ENCODE measurements at regions of chr5 and their contacts with region 1.

Region 1: GRCh38 chr5:64784451-64785025 is 15.8 kb downstream of the CWC27 start:
- DNase-seq: peak; percentile 82
- H3K4me3 ChIP-seq: no peak overlapping the region
- H3K27ac ChIP-seq: no peak overlapping the region
- H3K4me1 ChIP-seq: no peaks in the 10 kb centered on the region
- H3K27me3 ChIP-seq: no peaks in the 10 kb centered on the region
- CTCF ChIP-seq: peak; percentile 89

Region 2: DNA sequence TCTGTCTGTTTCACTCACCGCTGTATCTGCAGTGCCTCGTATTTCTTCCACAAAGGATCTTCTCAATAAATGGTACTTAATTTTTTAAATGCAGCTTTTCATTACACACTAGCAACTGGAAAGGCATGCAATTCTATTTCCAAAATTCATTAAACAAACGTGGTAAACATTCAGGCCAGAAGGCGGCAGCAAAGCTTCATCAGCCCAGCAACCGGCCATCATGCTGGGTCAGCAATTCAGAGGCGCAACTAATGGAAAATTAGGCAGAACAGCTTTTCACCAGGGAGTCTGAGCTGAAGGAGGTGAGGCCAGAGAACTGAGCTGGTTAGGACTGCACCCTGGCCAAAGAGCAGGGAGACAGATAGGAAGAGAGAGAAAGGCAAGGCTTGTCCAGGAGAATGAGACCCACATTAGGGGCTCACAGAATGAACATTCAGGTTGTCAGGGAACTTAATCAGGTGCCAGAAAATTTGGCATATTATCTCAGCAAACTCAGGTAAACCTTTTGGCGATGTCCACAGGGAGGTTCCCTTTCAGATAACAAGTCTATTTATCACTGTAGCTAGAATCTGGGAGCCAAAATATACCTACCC is 636.6 kb before region 1 on chr5:
- CTCF ChIA-PET with region 1: no interaction called
- POLR2A ChIA-PET with region 1: no interaction called
- intact Hi-C with region 1: loop called (anchors 10 kb)
- DNase-seq: peak; percentile 73
- H3K4me3 ChIP-seq: no peak overlapping the region
- H3K27ac ChIP-seq: no peak overlapping the region
- H3K4me1 ChIP-seq: no peaks in the 10 kb centered on the region
- H3K27me3 ChIP-seq: no peaks in the 10 kb centered on the region
- CTCF ChIP-seq: peak; percentile 75

Region 3: DNA sequence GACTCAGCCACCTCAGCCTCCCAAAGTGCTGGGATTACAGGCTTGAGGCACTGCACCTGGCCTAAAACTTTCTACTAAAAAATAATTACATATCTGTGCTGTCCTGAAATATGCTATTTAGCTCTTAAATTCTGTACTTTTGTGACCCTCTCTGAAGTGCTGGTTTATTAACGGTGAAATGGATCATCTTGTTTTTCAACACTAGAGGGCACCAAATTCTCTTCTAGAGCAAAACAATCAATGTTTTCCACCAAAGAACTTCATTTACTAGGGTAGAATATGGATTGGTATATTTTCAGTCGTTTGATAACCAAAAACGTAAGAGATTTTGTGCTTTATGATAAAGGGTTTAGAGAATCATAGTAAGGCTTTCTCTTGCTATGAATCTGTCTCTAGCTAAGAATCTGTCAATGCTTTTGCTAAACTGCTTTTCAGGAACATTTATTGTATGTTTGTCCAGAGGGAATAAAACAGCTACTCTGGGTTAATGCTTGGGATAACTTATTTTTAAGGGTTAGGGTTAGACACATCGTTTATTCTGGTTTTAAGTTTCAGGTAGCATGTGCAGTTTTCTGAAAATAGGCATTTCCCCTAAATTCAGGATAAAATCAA is 555.3 kb before region 1 on chr5:
- CTCF ChIA-PET with region 1: no interaction called
- POLR2A ChIA-PET with region 1: no interaction called
- intact Hi-C with region 1: loop called (anchors 2 kb)
- DNase-seq: peak; percentile 45
- H3K4me3 ChIP-seq: no peak overlapping the region
- H3K27ac ChIP-seq: no peak overlapping the region
- H3K4me1 ChIP-seq: no peaks in the 10 kb centered on the region
- H3K27me3 ChIP-seq: no peaks in the 10 kb centered on the region
- CTCF ChIP-seq: peak; percentile 69

Region 4: DNA sequence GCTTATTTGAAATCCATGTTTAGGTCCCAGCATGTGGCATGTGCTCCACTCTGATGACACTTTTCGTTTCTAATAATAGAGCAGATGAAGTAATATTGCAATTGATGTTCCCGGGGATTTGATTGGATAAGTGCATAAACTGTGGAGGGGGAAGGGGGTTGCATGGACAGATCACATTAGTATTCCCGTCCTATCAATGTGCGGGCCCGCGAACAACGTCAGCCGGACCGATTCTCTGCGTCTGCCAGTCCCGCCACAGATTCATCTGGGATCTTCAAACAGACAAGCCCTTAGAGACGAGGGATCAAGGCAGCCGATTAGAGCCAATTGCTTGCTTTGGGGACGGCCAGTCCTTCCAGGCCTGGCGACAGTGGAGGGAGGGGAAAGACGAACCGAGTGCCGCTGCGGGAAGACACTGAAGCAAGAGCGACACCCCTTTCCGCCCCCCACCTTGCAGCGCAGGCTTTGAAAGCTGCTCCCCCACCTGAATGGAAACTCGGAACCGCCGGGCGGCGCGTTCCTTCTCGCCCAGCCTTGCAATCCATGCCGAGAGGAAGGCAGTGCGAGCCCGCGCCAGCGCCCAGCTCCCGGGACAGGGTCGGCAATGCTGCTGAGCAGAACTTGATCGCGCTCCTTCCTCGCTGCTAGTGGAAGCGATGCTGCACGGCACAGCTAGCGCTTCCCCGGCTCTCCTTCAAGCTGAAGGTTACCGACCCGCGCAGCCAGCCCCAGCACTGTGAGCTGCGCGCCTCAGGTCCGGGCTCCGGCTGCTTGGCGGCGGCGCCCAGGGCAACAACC is 278.6 kb before region 1 on chr5 and contains the start of gene RGS7BP:
- CTCF ChIA-PET with region 1: no interaction called
- POLR2A ChIA-PET with region 1: no interaction called
- intact Hi-C with region 1: loop called (anchors 5 kb)
- DNase-seq: peak; percentile 43
- H3K4me3 ChIP-seq: peak within 1 kb of the TSS; percentile 49
- H3K27ac ChIP-seq: no peak within 1 kb of the TSS
- H3K4me1 ChIP-seq: no peaks in the 10 kb centered on the region
- H3K27me3 ChIP-seq: peaks cover 86% of the 10 kb centered on the region
- CTCF ChIP-seq: no peak
- total RNA-seq, gene RGS7BP: 3.1 TPM in 2 replicates

Region 5: GRCh38 chr5:64634997-64635686 is 149.4 kb before region 1 on chr5:
- CTCF ChIA-PET with region 1: no interaction called
- POLR2A ChIA-PET with region 1: no interaction called
- intact Hi-C with region 1: loop called (anchors 1 kb)
- DNase-seq: peak; percentile 83
- H3K4me3 ChIP-seq: no peak overlapping the region
- H3K27ac ChIP-seq: no peak overlapping the region
- H3K4me1 ChIP-seq: peaks cover 7% of the 10 kb centered on the region
- H3K27me3 ChIP-seq: no peaks in the 10 kb centered on the region
- CTCF ChIP-seq: peak; percentile 84

Region 6: DNA sequence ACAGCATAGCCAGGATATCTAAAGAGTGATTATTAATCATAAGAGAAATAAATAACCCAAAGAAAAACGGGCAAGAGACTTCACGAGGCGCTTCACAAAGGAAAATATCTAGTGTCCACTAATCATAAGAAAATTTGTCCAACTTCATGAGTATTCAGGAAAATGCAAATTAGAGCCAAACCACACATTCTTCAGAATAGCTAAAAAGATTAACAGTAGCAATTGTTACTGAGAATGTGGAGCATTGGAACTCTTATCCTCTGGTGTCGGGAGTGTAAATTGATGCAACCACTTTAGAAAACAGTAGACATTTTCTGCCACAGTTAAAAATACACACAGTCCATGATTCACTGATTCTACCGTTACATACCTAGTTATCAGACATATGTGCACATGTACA is 129.9 kb after region 1 on chr5:
- CTCF ChIA-PET with region 1: no interaction called
- POLR2A ChIA-PET with region 1: no interaction called
- intact Hi-C with region 1: no loop called
- DNase-seq: no peak
- H3K4me3 ChIP-seq: no peak overlapping the region
- H3K27ac ChIP-seq: no peak overlapping the region
- H3K4me1 ChIP-seq: no peaks in the 10 kb centered on the region
- H3K27me3 ChIP-seq: no peaks in the 10 kb centered on the region
- CTCF ChIP-seq: no peak

Measured in A673 (cell line).